OCI-LY7 (cell line): ENCODE measurements at regions of chr1 and their contacts with region 1.

Region 1: GRCh38 chr1:198015309-198015708 is 98.1 kb downstream of the LHX9 start:
- DNase-seq: no peak
- H3K4me3 ChIP-seq: no peak overlapping the region
- H3K27ac ChIP-seq: no peak overlapping the region
- H3K4me1 ChIP-seq: no peaks in the 10 kb centered on the region
- CTCF ChIP-seq: no peak

Region 2: DNA sequence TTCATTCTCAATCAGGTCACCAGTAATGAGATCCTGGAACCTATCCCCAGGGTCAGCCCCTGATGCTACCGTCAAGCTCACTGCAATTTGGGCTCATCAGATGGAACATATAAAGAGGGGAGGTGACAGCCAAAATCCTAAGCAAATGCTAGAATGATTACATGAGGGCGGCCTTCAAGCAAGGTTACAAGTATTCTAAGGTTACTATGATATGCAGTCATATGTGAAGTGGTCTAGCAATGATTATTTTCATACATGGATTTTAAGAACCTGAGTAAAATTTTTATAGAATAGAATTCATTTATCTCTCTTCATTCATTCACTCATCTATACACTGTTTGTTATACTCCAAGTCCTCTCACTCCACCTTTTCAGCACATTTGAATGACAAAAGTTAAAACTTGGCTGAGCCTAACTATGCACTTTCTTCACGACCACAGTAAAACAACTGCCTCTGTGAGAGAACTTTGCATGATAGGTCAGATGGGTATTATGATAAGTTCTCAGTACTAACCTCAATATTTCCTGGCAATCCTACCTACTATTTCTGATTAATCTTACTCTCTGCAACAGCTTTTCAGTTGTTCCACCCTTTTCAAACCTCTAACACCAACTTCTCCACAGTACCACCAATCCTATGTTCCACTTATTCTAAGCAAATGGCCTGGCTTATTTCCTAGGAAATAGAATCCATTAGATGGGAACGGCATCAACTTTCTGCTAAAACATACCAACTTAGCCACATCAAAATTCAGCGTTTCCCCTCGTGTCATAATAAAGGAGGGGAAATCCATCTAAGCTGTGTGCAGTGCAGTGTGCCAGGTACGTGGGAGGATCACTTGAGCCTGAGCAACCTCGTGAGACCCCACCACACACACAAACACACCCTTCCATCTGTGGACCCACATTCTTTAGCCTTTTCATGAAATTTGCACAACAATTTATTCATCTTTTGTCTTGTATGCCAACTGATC is 66.1 kb before region 1 on chr1:
- CTCF ChIA-PET with region 1: no interaction called
- POLR2A ChIA-PET with region 1: no interaction called
- intact Hi-C with region 1: no loop called
- DNase-seq: no peak
- H3K4me3 ChIP-seq: no peak overlapping the region
- H3K27ac ChIP-seq: no peak overlapping the region
- H3K4me1 ChIP-seq: no peaks in the 10 kb centered on the region
- CTCF ChIP-seq: no peak

Region 3: DNA sequence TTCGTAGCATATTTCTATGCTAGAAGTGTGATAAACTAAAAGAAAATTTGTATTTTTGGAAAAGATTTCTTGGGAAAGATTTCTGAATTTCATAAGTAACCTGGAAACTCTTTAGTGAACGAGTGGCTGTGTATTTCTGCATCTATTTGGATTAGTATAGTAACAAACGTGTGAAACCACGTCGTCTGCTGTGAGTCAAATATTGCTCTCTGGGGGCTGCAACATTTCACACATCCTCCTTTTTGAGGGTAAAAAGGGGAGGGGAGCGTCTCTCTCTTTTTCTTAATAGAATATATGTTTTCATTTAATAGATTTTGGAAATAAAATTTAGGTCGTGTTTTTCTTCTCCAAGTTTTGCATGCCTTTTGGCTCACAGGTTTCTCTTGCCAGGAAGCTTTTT is 53.4 kb before region 1 on chr1:
- CTCF ChIA-PET with region 1: no interaction called
- POLR2A ChIA-PET with region 1: no interaction called
- intact Hi-C with region 1: loop called (anchors 2 kb)
- DNase-seq: no peak
- H3K4me3 ChIP-seq: no peak overlapping the region
- H3K27ac ChIP-seq: no peak overlapping the region
- H3K4me1 ChIP-seq: no peaks in the 10 kb centered on the region
- CTCF ChIP-seq: no peak